Right ventricle myocardium inferior (tissue), 1 donor: ENCODE measurements at regions of chr14 and their contacts with region 1.

Region 1: GRCh38 chr14:105086833-105087307 is 21.6 kb upstream of the GPR132 start:
- DNase-seq: peak; percentile 94
- ATAC-seq: peak; percentile 75

Region 2: DNA sequence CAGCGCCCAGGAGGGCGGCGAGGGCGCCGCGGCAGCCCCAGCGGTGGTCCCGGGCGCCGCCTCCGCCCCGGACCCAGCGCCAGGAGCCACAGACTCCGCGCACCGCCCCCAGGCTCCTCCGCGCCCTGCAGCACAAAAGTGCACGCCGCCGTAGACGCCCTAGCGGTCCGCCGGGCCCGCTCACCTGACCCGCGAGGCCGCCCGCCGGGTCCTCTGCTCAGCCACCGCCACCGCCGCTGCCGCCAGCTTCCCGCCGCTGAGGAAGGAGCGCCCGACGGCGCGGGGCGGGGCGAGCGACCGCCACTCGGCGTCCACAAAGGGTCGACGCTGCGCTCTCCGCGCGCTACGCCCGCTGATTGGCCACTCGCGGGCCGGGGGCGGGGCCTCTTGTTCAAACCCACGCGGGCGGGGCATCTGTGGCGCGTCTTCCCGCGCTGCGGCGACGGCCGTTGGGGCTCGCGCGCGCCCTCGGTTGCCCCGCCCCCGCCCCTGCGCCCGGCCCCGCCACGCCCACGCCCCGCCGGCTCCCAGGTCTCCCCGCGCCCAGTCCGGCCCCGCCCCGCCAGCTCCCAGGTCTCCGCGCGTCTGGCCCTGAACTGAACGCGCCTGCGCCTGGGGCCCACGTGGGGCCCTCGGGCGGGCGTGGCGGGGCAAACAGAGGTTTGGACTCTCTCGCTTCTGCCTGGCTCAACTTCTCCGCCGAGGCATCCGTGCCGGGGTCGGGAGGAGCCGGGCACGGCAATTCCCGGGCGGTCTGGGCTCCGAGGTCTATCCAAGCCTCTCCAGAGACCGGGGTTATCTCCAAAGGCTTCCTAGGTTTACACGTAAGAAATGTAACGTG is 65.8 kb before region 1 on chr14 and contains the start of gene CDCA4:
- intact Hi-C with region 1: loop called (anchors 2 kb)
- DNase-seq: peak; percentile 99
- ATAC-seq: peak; percentile 99
- total RNA-seq, gene CDCA4: 3.1 TPM

Region 3: GRCh38 chr14:105153271-105153731 is 66.4 kb after region 1 on chr14:
- intact Hi-C with region 1: loop called (anchors 5 kb)
- DNase-seq: peak; percentile 82
- ATAC-seq: peak; percentile 36

Region 4: GRCh38 chr14:105197271-105197670 is 110.4 kb after region 1 on chr14:
- intact Hi-C with region 1: loop called (anchors 2 kb)
- DNase-seq: no peak
- ATAC-seq: peak; percentile 29

Region 5: DNA sequence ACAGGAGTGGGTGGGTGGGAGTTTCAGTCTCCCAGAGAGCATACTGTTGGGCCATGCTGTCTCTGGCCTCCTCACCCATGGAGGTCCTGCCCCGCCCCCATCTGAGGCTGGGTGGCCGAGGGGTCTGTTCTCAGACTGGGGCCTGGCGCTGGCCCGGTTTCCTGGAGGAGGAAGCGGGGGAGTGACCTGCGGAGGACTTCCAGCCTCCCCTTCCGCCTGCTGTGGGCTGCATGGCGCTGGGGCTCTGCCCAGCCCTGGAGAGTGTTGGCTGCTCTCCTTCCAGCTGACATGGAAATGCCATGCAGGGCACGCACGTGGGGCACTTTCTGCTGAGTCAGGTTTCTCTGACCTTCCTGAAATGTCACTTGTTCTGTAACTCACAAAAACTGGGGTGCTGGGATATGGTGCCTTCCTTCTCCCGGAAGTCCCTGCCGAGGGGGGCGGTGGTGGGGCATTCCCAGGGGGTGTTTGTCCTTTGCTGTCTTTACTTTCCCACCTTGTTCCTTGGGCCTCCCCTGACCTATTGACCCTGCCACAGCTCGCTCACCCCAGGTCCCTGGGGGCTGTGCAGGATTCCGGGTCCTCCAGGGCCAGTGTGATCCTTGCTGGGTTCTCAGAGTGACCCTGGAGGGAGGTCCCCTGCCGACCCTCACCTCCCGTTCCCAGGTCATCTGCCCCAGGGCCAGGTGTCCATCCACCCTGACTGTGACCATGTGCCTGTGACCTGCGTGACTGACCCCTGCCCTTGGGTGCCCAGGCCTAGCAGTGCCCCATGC is 251.3 kb after region 1 on chr14:
- intact Hi-C with region 1: loop called (anchors 5 kb)
- DNase-seq: no peak
- ATAC-seq: peak; percentile 47

Region 6: GRCh38 chr14:105473677-105474482 is 387.0 kb after region 1 on chr14:
- intact Hi-C with region 1: loop called (anchors 10 kb)
- DNase-seq: peak; percentile 97
- ATAC-seq: peak; percentile 40